ENCODE measurements at regions of chr2 and their contacts with region 1.

Region 1: DNA sequence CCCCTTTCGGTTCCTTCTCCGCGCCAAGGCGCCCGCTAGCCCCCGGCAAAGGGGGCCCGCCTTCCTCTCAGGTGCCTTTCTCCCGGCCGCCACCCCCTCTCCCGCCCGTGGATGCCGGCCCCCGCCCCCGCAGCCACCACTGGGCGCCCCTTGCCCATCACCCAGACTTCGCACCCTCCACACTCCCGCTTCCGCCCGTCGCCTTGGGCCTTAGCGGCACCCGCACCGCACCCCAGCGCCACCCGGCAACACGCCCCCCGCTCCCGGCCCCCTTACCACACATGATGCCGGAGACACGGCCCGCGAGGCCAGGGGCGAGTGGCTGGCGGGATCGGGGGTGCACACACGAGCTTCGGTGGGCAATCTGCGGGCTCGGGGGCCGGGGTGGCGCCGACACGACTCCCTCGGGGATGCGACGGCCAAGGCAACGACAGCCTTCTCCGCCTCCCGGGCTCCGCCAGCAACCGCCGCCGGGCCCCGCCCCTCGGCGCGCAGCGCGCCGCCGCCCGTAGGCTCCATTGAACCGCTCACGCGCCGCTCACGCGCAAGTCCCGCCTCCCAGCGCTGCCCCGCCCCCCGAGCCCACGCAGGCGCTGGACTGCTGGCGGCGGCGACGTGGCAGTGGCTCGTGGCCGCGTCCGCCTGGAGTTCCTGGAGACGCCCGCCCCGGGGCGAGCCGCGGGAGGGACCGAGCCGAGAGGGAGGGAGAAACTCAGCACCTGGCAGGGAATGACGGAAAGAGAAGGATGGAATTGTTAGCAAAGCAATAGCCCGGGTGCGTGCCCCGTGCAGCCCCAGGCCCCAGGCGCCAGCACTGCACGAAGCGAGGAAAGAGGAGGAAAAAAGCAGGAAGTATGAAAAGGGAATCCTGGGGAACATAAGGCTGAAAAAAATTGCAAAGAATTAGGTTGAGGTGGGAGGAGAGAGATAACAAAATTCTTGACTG is at the start of gene GFPT1:
- DNase-seq: peak; percentile 94
- ATAC-seq: peak; percentile 97
- H3K4me3 Mint-ChIP-seq: peak within 1 kb of the TSS; percentile 88
- H3K27ac Mint-ChIP-seq: peak within 1 kb of the TSS; percentile 81
- H3K4me1 Mint-ChIP-seq: peaks cover 38% of the 10 kb centered on the region
- H3K27me3 Mint-ChIP-seq: no peaks in the 10 kb centered on the region
- CTCF ChIP-seq: no peak
- total RNA-seq, gene GFPT1: 11.5 and 14.9 TPM in 2 replicates

Region 2: DNA sequence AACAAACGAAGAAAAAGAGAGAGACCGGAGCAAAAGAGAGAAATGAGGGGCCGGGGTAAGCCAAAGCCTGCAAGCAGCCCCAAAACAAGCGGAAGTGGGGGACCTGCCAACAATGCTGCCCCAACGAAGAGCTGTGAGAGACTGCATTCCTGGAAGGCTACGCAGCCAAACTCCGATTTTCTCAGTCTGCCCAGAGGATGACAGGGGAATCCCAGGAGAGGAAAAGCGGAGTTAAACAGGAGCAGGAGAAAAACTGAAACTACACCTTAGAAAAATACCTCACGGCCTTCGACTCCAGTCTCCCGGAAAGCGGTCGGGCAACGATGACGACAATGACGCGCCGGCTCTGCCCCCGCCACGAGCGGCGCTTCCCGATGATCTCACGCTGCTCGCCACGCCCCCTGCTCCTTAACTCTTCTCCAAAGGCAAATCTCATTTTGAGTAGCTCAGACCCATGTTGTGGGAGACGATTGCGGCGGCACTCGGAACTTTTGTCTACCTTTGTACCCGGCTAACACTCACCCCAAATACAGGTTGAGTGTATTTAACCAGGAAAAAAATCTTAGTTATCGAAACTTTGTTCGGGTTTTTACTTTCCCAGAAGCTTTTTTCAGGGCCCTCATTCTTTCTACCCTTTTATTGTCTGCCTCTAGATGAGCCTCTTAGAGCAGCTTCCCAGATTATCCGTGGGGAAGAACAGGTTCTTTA is 1324.2 kb before region 1 on chr2 and contains the start of gene C1D:
- CTCF ChIA-PET with region 1: no interaction called
- POLR2A ChIA-PET with region 1: no interaction called
- intact Hi-C with region 1: loop called (anchors 1 kb)
- DNase-seq: peak; percentile 94
- ATAC-seq: peak; percentile 92
- H3K4me3 Mint-ChIP-seq: peak within 1 kb of the TSS; percentile 93
- H3K27ac Mint-ChIP-seq: peak within 1 kb of the TSS; percentile 95
- H3K4me1 Mint-ChIP-seq: peaks cover 41% of the 10 kb centered on the region
- H3K27me3 Mint-ChIP-seq: peaks cover 2% of the 10 kb centered on the region
- CTCF ChIP-seq: no peak
- total RNA-seq, gene C1D: 21.5 and 25.2 TPM in 2 replicates

Region 3: DNA sequence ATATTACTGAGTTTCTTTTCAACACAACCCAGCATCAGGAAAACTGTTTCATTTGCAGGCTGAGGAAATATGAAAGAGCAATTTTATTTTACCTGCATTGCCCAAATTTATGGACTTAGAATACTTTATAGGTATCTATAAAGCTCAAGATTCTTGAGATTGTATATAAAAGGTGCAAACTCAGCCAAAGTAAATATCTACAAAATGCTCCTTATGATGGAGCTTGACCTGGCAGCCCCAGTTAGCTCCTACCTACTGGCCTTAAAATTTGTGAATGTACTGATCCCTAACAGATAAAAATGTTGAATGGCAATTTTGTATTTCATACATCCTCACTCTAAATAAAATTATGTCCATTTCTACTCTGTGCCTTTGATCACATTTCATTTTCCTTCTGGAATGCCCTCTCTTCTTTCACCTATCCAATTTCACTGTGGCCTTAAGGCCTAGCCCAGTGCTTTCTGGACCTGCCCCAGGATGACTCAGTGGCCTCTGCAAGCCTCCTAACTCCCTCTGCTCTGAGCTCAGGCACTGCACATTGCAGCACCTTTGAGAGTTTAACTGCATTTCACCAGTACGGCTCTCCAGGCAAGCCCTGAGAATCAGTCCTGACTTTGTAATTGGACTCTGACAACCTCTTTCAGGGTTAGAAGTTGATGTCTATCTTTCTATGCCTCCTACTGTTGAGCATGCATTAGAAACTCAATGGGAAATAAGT is 248.1 kb before region 1 on chr2:
- CTCF ChIA-PET with region 1: no interaction called
- POLR2A ChIA-PET with region 1: no interaction called
- intact Hi-C with region 1: no loop called
- DNase-seq: no peak
- ATAC-seq: no peak
- H3K4me3 Mint-ChIP-seq: no peak overlapping the region
- H3K27ac Mint-ChIP-seq: no peak overlapping the region
- H3K4me1 Mint-ChIP-seq: no peaks in the 10 kb centered on the region
- H3K27me3 Mint-ChIP-seq: peaks cover 5% of the 10 kb centered on the region
- CTCF ChIP-seq: no peak

Region 4: DNA sequence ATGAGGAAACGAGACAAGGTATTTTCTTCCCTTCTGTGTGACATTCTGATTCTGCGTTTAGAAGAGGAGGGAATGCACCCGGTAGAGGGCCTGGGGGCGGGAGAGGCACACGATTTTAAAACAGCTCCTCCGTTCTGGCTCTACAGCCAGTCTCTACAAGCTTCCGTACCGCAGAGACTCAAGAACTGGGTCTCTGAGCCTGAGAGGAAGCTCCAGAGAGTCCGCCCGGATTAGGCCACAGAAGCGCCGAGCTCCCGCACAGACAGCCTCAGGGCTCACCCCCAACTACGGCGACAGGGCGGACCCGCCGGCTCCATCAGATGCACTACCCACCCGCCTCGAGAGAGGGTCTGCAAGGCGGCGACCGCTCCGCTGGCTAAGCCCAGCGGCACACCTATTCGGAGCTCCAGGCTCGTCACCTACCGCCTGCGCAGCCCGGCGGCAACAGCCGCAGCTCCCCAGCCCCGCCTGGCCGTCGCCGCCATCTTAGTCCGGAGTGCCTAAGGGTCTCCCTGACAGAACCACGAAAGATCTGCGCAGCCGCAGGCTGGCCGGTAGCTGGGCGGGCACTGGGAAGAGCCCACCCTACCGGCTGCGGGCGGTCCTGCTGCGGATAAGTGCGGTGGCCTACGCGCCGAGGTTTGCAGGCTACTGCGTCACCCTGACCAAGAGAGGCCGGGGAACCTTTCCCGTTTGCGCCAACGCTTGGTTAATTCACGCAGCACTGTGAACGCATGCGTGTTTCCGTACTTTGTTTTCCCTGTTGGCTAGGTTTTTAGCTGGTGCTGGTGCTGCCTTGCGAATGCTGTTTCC is 50.1 kb after region 1 on chr2 and contains the start of gene NFU1:
- CTCF ChIA-PET with region 1: interaction called, 3 read pairs
- POLR2A ChIA-PET with region 1: interaction called, 16 read pairs
- intact Hi-C with region 1: loop called (anchors 1 kb)
- DNase-seq: peak; percentile 85
- ATAC-seq: peak; percentile 95
- H3K4me3 Mint-ChIP-seq: peak within 1 kb of the TSS; percentile 96
- H3K27ac Mint-ChIP-seq: peak within 1 kb of the TSS; percentile 93
- H3K4me1 Mint-ChIP-seq: peaks cover 34% of the 10 kb centered on the region
- H3K27me3 Mint-ChIP-seq: no peaks in the 10 kb centered on the region
- CTCF ChIP-seq: no peak
- total RNA-seq, gene NFU1: 24.3 and 31.1 TPM in 2 replicates

Region 5: GRCh38 chr2:69717861-69718273 is 330.8 kb after region 1 on chr2:
- CTCF ChIA-PET with region 1: no interaction called
- POLR2A ChIA-PET with region 1: no interaction called
- intact Hi-C with region 1: loop called (anchors 5 kb)
- DNase-seq: no peak
- ATAC-seq: no peak
- H3K4me3 Mint-ChIP-seq: no peak overlapping the region
- H3K27ac Mint-ChIP-seq: no peak overlapping the region
- H3K4me1 Mint-ChIP-seq: peaks cover 4% of the 10 kb centered on the region
- H3K27me3 Mint-ChIP-seq: peaks cover 39% of the 10 kb centered on the region
- CTCF ChIP-seq: no peak

Region 6: GRCh38 chr2:69893684-69894551 is 506.9 kb after region 1 on chr2 and contains the start of gene SNRNP27:
- CTCF ChIA-PET with region 1: no interaction called
- POLR2A ChIA-PET with region 1: no interaction called
- intact Hi-C with region 1: loop called (anchors 5 kb)
- DNase-seq: peak; percentile 69
- ATAC-seq: peak; percentile 88
- H3K4me3 Mint-ChIP-seq: peak within 1 kb of the TSS; percentile 100
- H3K27ac Mint-ChIP-seq: peak within 1 kb of the TSS; percentile 98
- H3K4me1 Mint-ChIP-seq: peaks cover 43% of the 10 kb centered on the region
- H3K27me3 Mint-ChIP-seq: no peaks in the 10 kb centered on the region
- CTCF ChIP-seq: no peak
- total RNA-seq, gene SNRNP27: 43.0 and 49.1 TPM in 2 replicates

Measured in activated B cell treated with CpG ODN at 0.5 μM for 24 hours (primary cell).